ENCODE measurements at regions of chr6 and their contacts with region 1.

Region 1: DNA sequence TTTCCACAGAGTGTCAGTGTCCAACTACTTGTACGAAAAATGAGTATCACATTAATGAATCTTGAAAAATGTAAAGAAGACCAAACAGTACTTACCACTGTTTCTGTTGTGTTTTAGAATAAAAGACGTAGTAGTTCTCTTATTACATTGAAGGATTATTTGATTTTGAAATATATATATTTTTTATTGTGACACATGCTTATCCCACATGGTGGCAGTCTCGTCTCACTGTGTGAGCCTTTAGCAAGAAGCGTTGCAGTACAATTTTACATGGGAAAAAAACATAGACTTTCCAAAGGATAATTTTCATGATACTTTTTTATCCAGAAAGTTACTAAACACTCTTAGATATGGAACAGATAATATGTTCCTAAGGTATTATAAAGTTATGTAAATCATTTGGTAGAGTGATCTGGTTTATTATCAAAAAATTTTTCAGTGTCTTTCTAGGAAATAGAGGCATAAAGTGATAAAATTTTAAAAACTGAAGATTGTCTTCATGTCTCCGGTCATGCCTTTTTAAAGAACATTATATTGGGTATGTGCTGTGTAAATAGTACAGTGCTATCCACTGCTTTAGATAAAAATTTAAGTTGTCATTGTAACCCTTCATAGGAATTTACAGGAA is 117.5 kb upstream of the SAMD5 start:
- DNase-seq: peak; percentile 52
- H3K4me3 ChIP-seq: no peak overlapping the region
- H3K27ac ChIP-seq: no peak overlapping the region
- H3K4me1 ChIP-seq: no peaks in the 10 kb centered on the region
- H3K27me3 ChIP-seq: no peaks in the 10 kb centered on the region
- CTCF ChIP-seq: peak; percentile 16 to 17
- POLR2A ChIP-seq: no peak

Region 2: DNA sequence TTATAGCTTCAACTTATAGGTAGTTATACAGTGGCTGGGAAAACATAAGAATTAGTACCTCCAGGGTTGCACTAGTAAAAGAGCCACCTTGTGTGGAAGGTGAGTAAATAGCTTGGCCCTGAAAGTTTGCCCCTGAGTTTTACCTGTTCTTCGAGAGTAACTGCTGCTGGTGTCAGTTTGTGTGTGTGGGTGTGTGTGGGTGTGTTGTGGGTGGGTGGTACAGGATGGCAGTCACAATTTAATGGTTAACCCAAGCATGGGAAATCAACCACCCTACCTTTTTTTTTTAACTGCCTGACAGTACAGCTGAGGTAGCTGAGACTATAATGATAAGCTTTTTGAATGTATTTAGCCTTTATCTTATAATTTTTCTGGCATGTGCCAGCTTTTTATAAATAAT is 49.5 kb before region 1 on chr6:
- CTCF ChIA-PET with region 1: no interaction called
- POLR2A ChIA-PET with region 1: no interaction called
- dilution Hi-C with region 1: no loop called
- intact Hi-C with region 1: no loop called
- DNase-seq: no peak
- H3K4me3 ChIP-seq: no peak overlapping the region
- H3K27ac ChIP-seq: no peak overlapping the region
- H3K4me1 ChIP-seq: no peaks in the 10 kb centered on the region
- H3K27me3 ChIP-seq: no peaks in the 10 kb centered on the region
- CTCF ChIP-seq: no peak
- POLR2A ChIP-seq: no peak

Region 3: DNA sequence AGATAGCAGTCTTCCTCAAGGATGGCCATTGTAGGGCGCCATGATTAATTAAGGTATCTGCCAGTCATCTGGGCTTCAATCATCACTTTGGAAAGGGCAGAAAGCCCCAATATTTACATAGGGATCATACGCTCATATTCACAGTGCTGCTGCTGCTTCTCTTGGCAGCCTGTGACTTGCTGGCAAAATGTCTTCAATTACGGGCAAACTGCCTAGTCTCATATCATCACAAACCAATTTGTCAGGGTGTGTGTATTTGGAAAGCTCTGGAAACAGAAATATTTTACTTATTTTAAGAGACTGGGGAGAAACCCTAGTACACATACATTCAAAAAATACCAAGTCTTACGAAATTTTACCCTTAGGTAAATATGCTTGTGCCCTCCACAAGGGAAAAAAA is 195.0 kb after region 1 on chr6:
- CTCF ChIA-PET with region 1: no interaction called
- POLR2A ChIA-PET with region 1: no interaction called
- dilution Hi-C with region 1: no loop called
- intact Hi-C with region 1: no loop called
- DNase-seq: no peak
- H3K4me3 ChIP-seq: no peak overlapping the region
- H3K27ac ChIP-seq: no peak overlapping the region
- H3K4me1 ChIP-seq: no peaks in the 10 kb centered on the region
- H3K27me3 ChIP-seq: no peaks in the 10 kb centered on the region
- CTCF ChIP-seq: no peak
- POLR2A ChIP-seq: no peak

Region 4: GRCh38 chr6:147970975-147971374 is 580.0 kb after region 1 on chr6:
- CTCF ChIA-PET with region 1: no interaction called
- POLR2A ChIA-PET with region 1: no interaction called
- dilution Hi-C with region 1: no loop called
- intact Hi-C with region 1: loop called (anchors 1 kb)
- DNase-seq: peak; percentile 14
- H3K4me3 ChIP-seq: no peak overlapping the region
- H3K27ac ChIP-seq: no peak overlapping the region
- H3K4me1 ChIP-seq: no peaks in the 10 kb centered on the region
- H3K27me3 ChIP-seq: no peaks in the 10 kb centered on the region
- CTCF ChIP-seq: peak in 1 of 2 donors; percentile 20
- POLR2A ChIP-seq: no peak

Measured in endothelial cell of umbilical vein (primary cell).